Activated CD4-positive, alpha-beta memory T cell treated with anti-CD3 and anti-CD28 coated beads for 36 hours (primary cell): ENCODE measurements at regions of chr11 and their contacts with region 1.

Region 1: DNA sequence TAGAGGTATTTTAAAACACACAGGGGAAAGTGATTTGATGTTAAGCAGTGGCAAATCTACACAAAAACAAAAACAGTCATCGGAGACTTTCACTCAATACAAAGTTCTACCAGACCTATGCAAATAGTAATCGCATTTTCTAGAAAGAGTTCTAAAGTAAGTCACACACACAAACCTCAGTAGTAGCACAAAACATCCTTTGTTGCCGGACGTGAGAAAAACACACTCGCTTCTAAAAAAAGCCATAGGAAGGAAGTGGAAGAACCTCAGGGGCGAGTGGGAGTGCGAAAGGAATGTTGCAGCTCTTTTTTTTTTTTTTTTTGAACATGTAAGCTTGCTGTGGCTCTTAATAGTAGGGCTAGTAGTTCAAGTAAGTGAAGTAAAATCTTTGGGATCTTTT is 88.9 kb downstream of the MAML2 start:
- DNase-seq: peak; percentile 48
- H3K4me3 Mint-ChIP-seq: peak overlapping the region; percentile 46
- H3K27ac Mint-ChIP-seq: peak overlapping the region; percentile 71
- H3K4me1 Mint-ChIP-seq: peaks cover 84% of the 10 kb centered on the region
- H3K27me3 Mint-ChIP-seq: no peaks in the 10 kb centered on the region

Region 2: DNA sequence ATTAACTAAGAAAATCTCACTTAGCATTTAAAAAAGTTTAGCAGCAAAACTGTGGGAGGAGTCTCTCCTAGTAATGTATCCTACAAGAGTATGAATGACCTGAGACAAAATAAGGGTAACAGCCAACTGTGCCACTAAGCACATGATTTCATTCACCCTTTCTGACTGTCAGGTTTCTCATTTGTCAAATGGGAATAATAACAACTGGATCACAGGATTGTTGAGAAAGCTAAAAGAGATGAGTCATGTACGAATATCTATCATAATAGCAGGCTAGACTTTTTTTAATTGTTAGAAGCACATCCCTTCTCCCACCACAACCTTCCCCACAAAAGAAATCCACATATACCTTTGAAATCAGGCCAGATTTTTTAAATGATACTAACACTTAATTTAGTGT is 369.7 kb before region 1 on chr11:
- CTCF ChIA-PET with region 1: no interaction called
- POLR2A ChIA-PET with region 1: no interaction called
- intact Hi-C with region 1: no loop called
- DNase-seq: no peak
- H3K4me3 Mint-ChIP-seq: no peak overlapping the region
- H3K27ac Mint-ChIP-seq: no peak overlapping the region
- H3K4me1 Mint-ChIP-seq: peaks cover 5% of the 10 kb centered on the region
- H3K27me3 Mint-ChIP-seq: no peaks in the 10 kb centered on the region

Region 3: GRCh38 chr11:95977534-95978174 is 276.4 kb before region 1 on chr11:
- CTCF ChIA-PET with region 1: no interaction called
- POLR2A ChIA-PET with region 1: no interaction called
- intact Hi-C with region 1: no loop called
- DNase-seq: no peak
- H3K4me3 Mint-ChIP-seq: no peak overlapping the region
- H3K27ac Mint-ChIP-seq: no peak overlapping the region
- H3K4me1 Mint-ChIP-seq: no peaks in the 10 kb centered on the region
- H3K27me3 Mint-ChIP-seq: no peaks in the 10 kb centered on the region

Region 4: DNA sequence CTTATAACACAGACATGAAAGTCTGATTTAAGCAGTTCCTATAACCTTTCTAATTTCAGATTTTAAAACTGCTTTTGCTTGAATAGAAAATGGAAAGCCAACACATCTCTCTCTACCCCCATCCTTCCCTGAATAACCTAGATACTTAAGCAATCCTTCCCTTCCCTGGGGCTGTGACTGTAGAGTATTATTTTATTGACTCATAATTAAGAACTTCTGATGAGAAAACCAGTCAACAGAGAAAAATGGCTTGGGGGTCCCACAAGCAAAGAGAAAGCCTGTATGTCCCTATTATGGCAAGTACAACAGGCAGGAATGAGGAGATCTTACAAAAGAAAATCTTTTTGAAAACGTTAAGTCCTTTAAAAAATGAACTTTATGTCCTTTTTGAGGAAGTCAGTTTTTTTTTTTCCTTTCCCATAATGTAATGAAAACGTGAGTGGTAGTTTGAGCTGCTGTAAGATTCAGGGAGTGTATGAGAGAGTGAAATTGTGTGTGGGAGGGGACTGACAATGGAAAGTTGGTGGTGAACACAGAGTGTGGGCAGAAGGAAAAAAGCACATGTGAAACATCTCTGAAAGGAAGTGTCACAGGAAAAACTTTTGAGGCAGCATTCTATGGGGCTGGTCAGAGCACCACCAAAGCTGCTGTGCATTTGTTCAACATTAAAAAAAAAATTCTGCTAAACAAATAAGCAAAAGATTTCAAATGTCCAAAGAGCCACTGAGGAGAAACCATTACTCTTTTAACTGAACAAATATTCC is 65.7 kb before region 1 on chr11:
- CTCF ChIA-PET with region 1: no interaction called
- POLR2A ChIA-PET with region 1: interaction called, 3 read pairs
- intact Hi-C with region 1: loop called (anchors 1 kb)
- DNase-seq: peak; percentile 59
- H3K4me3 Mint-ChIP-seq: peak overlapping the region; percentile 7
- H3K27ac Mint-ChIP-seq: peak overlapping the region; percentile 79
- H3K4me1 Mint-ChIP-seq: peaks cover 74% of the 10 kb centered on the region
- H3K27me3 Mint-ChIP-seq: no peaks in the 10 kb centered on the region

Region 5: GRCh38 chr11:96235751-96236150 is 18.3 kb before region 1 on chr11:
- CTCF ChIA-PET with region 1: no interaction called
- POLR2A ChIA-PET with region 1: interaction called, 7 read pairs
- intact Hi-C with region 1: loop called (anchors 1 kb)
- DNase-seq: peak; percentile 90
- H3K4me3 Mint-ChIP-seq: peak overlapping the region; percentile 58
- H3K27ac Mint-ChIP-seq: peak overlapping the region; percentile 94
- H3K4me1 Mint-ChIP-seq: peaks cover 50% of the 10 kb centered on the region
- H3K27me3 Mint-ChIP-seq: no peaks in the 10 kb centered on the region

Region 6: DNA sequence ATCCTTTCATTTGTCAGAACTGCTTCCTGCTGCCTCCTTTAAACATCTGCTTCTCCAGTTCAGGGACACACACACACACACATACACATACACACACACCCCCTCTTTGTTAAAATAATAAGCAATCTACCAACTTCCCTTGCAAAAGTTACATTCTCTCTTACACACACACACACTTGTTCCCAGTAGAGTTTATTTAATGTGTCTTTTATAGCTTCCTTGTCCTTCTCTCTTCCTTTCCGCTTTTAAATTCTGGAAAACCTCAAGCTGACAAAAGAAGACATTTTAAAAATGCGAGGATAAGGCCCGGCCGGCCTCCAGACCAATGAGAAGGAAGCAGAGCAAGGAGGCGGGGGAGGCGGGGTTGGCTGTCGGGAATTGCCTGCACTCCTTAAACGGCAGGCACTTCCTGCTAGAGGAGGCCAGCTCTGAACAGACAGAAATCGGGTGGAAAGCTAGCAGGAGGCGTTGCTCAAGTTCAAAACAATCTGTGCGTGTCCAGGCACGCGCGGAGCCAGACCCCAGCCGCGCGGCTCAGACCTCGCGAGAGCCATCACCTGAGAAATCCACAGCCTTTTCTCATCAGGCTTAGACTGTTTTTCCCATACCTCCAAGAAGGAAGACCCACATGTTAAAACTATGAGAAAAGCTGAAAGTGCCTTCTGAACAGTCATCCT is 11.0 kb before region 1 on chr11:
- CTCF ChIA-PET with region 1: interaction called, 4 read pairs
- POLR2A ChIA-PET with region 1: interaction called, 6 read pairs
- intact Hi-C with region 1: loop called (anchors 1 kb)
- DNase-seq: peak; percentile 91
- H3K4me3 Mint-ChIP-seq: peak overlapping the region; percentile 78
- H3K27ac Mint-ChIP-seq: peak overlapping the region; percentile 95
- H3K4me1 Mint-ChIP-seq: peaks cover 53% of the 10 kb centered on the region
- H3K27me3 Mint-ChIP-seq: no peaks in the 10 kb centered on the region

Region 7: DNA sequence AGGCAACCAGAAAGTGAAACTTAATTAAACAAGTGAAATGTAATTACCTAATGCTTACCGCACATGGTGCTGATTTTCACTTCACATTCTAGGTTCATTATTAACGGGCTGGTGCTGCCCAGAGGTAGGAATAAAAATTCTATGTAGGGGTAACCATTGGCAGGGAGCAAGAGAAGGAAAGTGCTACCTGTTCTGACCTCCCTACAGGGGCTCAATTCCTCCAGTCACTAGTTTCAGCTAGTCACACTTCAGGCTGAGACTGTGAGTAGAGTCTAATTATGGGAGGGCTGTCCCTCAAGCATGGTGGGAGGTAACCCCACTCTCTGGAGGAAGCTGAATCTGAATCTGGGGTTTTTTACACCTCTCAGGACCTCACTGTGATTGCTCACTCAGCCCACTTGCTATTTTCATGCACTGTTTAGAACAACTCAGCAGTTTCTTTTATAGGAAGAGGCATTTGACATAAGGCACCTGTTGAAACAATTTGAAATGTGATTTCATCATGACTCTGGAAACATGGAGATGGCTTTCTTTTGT is 13.5 kb after region 1 on chr11:
- CTCF ChIA-PET with region 1: interaction called, 3 read pairs
- POLR2A ChIA-PET with region 1: interaction called, 4 read pairs
- intact Hi-C with region 1: loop called (anchors 1 kb)
- DNase-seq: peak; percentile 71
- H3K4me3 Mint-ChIP-seq: peak overlapping the region; percentile 42
- H3K27ac Mint-ChIP-seq: peak overlapping the region; percentile 84
- H3K4me1 Mint-ChIP-seq: peaks cover 90% of the 10 kb centered on the region
- H3K27me3 Mint-ChIP-seq: no peaks in the 10 kb centered on the region

Region 8: DNA sequence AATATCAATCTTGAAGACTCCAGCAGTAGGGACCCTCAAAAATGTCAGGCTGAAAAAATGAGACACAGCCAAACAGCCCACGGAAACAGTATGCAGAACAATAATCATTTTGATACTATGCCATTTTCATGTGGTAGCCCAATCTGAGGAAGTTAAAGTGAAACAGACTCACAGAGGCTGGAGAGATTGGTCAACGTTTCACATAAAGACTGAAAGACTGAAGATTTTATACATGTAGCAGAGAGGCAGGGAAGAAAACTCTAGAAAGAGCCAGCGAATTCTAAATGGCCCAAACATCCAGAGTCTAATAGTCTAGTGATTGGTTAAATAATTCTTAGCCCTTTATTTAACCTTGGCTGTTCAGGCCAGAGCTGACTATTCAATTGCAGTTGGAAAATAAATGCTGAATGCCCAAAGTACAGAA is 39.5 kb after region 1 on chr11:
- CTCF ChIA-PET with region 1: no interaction called
- POLR2A ChIA-PET with region 1: no interaction called
- intact Hi-C with region 1: loop called (anchors 2 kb)
- DNase-seq: no peak
- H3K4me3 Mint-ChIP-seq: no peak overlapping the region
- H3K27ac Mint-ChIP-seq: peak overlapping the region; percentile 0
- H3K4me1 Mint-ChIP-seq: peaks cover 71% of the 10 kb centered on the region
- H3K27me3 Mint-ChIP-seq: no peaks in the 10 kb centered on the region

Region 9: DNA sequence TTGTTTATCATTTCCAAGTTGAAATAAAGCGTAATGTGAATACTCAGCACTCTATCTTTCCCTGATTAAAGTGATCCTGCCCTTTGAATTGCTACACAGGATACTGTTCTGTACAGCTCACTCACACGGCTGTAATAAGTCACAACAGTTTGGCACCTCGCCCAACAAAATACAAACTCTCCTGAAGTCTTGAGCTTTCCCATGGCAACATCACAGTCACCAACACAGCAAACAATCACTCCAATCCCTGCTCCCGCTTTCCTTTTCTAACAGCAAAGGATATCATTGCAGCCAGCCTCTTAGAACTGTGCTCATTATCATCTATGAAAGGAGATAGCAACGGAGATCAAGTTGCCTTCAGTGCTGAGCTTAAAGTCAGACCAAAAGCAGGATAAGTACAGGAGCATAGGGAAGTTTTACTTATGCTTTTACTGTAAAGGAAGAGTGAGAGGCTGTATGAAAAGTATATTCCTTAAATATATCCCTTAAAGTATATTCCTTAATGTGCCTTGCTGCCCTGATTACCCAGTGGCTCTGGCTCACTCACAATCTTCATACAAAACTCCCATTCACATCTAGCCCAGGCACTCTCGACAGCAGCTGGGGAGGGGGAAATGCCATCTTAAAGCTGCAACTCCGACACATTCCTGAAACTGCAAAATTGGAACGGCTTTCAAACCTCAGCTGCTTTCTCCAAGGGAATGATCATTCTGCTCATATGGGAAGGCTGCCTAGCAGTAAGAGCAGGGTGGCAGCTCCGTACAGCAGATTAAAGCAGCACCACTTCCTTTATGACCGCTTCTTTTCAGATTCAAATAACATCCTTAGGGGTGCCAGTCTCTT is 53.1 kb after region 1 on chr11:
- CTCF ChIA-PET with region 1: no interaction called
- POLR2A ChIA-PET with region 1: no interaction called
- intact Hi-C with region 1: no loop called
- DNase-seq: no peak
- H3K4me3 Mint-ChIP-seq: peak overlapping the region; percentile 27
- H3K27ac Mint-ChIP-seq: peak overlapping the region; percentile 2
- H3K4me1 Mint-ChIP-seq: peaks cover 69% of the 10 kb centered on the region
- H3K27me3 Mint-ChIP-seq: no peaks in the 10 kb centered on the region